Calu3 (cell line): ENCODE measurements at regions of chr20 and their contacts with region 1.

Region 1: DNA sequence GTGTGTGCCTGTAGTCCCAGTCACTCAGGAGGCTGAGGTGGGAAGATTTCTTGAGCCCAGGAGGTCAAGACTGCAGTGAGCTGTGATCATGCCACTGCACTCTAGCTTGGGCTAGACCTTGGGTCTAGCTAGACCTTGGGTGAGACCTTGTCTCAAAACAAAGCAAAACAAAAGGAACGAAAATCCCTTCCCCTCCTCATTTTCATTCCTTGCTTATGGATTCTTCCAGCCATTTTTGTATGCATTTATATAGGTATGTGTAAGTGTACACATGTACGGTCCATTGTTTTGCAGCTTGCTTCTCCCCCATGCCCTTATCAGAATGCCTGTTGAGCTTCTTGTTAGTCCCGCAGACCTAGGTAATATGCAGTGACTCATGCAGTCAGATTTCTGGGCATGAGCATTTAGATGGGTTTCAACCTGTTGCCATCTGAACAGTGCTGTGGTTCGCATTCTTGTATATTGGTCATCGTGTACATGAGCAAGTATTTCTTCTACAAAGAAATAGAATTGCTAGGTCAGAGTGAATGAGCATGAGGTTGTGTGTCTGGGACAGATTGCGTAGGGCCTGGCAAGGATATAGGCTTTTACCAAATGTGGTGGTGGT is 73.2 kb downstream of the ATRN start:
- DNase-seq: no peak
- H3K4me3 Mint-ChIP-seq: no peak overlapping the region
- H3K27ac Mint-ChIP-seq: no peak overlapping the region
- H3K4me1 Mint-ChIP-seq: no peaks in the 10 kb centered on the region
- H3K27me3 Mint-ChIP-seq: no peaks in the 10 kb centered on the region
- CTCF ChIP-seq: no peak

Region 2: DNA sequence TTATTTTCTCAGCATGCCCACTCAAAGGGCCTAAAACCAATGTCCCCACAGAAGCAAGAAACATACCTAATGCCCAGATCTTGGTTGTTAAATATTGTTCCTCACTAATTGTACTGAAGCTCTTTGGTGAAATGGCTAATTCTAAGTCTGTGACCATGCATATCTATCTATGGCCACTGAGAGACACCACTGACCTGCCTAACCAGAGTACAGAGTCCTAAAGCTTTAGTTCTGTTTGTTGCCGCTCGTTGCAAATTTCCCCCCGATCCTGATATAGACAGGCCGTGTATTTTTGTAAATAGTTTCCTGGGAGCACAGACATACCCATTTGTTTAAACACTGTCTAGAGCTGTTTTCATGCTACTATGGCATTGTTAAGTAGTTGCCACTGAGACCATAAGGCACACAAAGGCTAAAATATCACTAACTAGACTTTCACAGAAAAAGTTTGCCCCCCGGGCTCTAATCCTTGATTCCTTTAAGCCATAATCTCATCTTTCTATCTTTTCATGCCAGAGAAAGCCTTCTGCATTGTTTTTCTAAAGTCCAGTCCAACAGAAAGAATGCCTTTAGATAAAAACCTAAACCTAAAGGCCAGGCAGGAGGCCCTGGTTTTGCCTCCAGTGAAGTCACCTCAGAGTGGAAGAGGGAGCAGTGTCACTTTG is 185.2 kb before region 1 on chr20:
- CTCF ChIA-PET with region 1: no interaction called
- intact Hi-C with region 1: loop called (anchors 10 kb)
- DNase-seq: no peak
- H3K4me3 Mint-ChIP-seq: no peak overlapping the region
- H3K27ac Mint-ChIP-seq: no peak overlapping the region
- H3K4me1 Mint-ChIP-seq: peaks cover 11% of the 10 kb centered on the region
- H3K27me3 Mint-ChIP-seq: no peaks in the 10 kb centered on the region
- CTCF ChIP-seq: no peak

Region 3: GRCh38 chr20:3461211-3461771 is 82.7 kb before region 1 on chr20:
- CTCF ChIA-PET with region 1: no interaction called
- intact Hi-C with region 1: no loop called
- DNase-seq: no peak
- H3K4me3 Mint-ChIP-seq: no peak overlapping the region
- H3K27ac Mint-ChIP-seq: no peak overlapping the region
- H3K4me1 Mint-ChIP-seq: no peaks in the 10 kb centered on the region
- H3K27me3 Mint-ChIP-seq: peaks cover 17% of the 10 kb centered on the region
- CTCF ChIP-seq: no peak

Region 4: GRCh38 chr20:3483784-3484183 is 60.2 kb before region 1 on chr20:
- CTCF ChIA-PET with region 1: no interaction called
- intact Hi-C with region 1: loop called (anchors 10 kb)
- DNase-seq: no peak
- H3K4me3 Mint-ChIP-seq: no peak overlapping the region
- H3K27ac Mint-ChIP-seq: no peak overlapping the region
- H3K4me1 Mint-ChIP-seq: peaks cover 3% of the 10 kb centered on the region
- H3K27me3 Mint-ChIP-seq: no peaks in the 10 kb centered on the region
- CTCF ChIP-seq: no peak

Region 5: GRCh38 chr20:3621111-3621510 is 77.1 kb after region 1 on chr20:
- CTCF ChIA-PET with region 1: no interaction called
- intact Hi-C with region 1: no loop called
- DNase-seq: no peak
- H3K4me3 Mint-ChIP-seq: no peak overlapping the region
- H3K27ac Mint-ChIP-seq: no peak overlapping the region
- H3K4me1 Mint-ChIP-seq: no peaks in the 10 kb centered on the region
- H3K27me3 Mint-ChIP-seq: no peaks in the 10 kb centered on the region
- CTCF ChIP-seq: no peak

Region 6: GRCh38 chr20:3706774-3707507 is 162.9 kb after region 1 on chr20:
- CTCF ChIA-PET with region 1: no interaction called
- intact Hi-C with region 1: no loop called
- DNase-seq: no peak
- H3K4me3 Mint-ChIP-seq: no peak overlapping the region
- H3K27ac Mint-ChIP-seq: no peak overlapping the region
- H3K4me1 Mint-ChIP-seq: no peaks in the 10 kb centered on the region
- H3K27me3 Mint-ChIP-seq: peaks cover 41% of the 10 kb centered on the region
- CTCF ChIP-seq: no peak